Activated CD4-positive, alpha-beta T cell treated with anti-CD3 and anti-CD28 coated beads for 36 hours (primary cell): ENCODE measurements at regions of chr1 and their contacts with region 1.

Region 1: DNA sequence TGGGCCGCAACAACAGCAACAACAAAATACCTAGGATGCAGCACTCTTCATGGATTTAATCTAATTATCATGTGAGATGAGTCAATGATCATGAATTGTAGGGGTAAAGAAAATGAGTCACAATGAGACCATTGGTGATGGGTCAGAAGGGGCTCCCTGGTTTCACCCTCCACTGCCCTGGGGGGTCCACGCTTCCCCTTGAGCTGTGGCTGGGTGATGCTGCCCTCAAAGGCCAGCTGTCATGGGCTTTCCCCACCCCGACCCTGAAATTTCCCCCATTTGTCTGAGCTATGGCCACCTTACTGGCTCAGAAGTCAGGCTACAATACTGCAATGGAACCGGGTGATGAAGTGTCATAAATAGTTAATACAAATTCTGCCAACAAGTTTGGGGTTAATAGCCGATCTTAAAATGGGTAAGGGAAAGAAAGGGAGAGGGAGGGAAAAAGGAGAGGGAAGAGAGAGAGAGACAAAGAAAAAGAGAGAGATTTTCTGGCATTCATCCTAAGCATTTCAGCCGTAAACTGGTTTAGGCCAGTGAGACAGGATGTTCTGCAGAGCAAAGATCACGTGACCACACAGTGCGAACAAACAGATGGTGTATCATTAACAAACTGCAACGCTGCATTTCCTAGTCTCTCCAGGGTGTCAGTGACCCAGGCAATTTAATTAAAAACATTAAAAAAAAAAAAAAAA is 143.4 kb upstream of the ERRFI1 start:
- DNase-seq: peak; percentile 65
- ATAC-seq: peak; percentile 86
- H3K4me3 Mint-ChIP-seq: peak overlapping the region; percentile 1
- H3K27ac Mint-ChIP-seq: peak overlapping the region; percentile 93
- H3K4me1 Mint-ChIP-seq: peaks cover 39% of the 10 kb centered on the region
- H3K27me3 Mint-ChIP-seq: no peaks in the 10 kb centered on the region

Region 2: GRCh38 chr1:7561331-7561921 is 608.1 kb before region 1 on chr1:
- CTCF ChIA-PET with region 1: no interaction called
- POLR2A ChIA-PET with region 1: no interaction called
- intact Hi-C with region 1: no loop called
- DNase-seq: peak; percentile 61
- ATAC-seq: peak; percentile 73
- H3K4me3 Mint-ChIP-seq: no peak overlapping the region
- H3K27ac Mint-ChIP-seq: no peak overlapping the region
- H3K4me1 Mint-ChIP-seq: no peaks in the 10 kb centered on the region
- H3K27me3 Mint-ChIP-seq: no peaks in the 10 kb centered on the region

Region 3: GRCh38 chr1:8047681-8048445 is 121.6 kb before region 1 on chr1:
- CTCF ChIA-PET with region 1: no interaction called
- POLR2A ChIA-PET with region 1: no interaction called
- intact Hi-C with region 1: loop called in 1 of 2 experiments (anchors 5 kb)
- DNase-seq: no peak
- ATAC-seq: no peak
- H3K4me3 Mint-ChIP-seq: no peak overlapping the region
- H3K27ac Mint-ChIP-seq: peak overlapping the region; percentile 57
- H3K4me1 Mint-ChIP-seq: peaks cover 25% of the 10 kb centered on the region
- H3K27me3 Mint-ChIP-seq: peaks cover 4% of the 10 kb centered on the region

Region 4: GRCh38 chr1:8154621-8155052 is 14.9 kb before region 1 on chr1:
- CTCF ChIA-PET with region 1: interaction called, 5 read pairs
- POLR2A ChIA-PET with region 1: no interaction called
- intact Hi-C with region 1: loop called in 1 of 2 experiments (anchors 2 kb)
- DNase-seq: no peak
- ATAC-seq: no peak
- H3K4me3 Mint-ChIP-seq: no peak overlapping the region
- H3K27ac Mint-ChIP-seq: no peak overlapping the region
- H3K4me1 Mint-ChIP-seq: peaks cover 46% of the 10 kb centered on the region
- H3K27me3 Mint-ChIP-seq: peaks cover 10% of the 10 kb centered on the region

Region 5: DNA sequence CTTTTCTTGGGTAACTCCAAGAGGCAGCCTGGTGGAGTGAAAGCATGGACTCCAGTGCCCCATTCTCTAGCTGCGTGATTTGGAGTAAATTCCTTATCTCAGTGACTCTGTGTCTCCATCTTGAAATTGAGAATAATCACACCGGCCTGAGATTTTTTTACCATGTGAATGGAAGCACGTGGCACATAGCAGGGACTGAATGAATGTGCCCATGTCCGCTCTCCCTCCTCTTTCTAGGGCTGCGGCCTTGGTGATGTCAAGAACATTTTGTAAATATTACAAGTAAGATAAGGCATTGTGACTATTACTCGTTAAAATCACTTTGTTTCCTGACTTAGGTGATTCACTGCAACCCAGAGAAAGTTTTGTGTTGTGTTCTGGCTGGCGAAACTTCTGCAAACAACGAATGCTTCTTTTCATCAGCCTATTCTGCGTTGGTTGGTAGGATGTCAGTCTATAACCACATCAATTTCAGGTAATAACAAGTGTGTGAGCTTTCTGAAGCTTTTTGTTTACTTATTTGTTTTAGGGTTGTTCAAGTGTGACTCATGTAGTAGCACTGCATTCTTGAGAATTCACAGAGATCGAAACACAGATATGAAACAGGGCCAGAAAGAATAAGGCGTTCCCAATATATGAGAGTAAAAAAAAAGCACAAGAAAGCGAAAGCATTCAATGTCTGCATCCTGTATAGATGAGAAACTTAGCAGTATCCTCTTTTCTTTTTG is 12.7 kb after region 1 on chr1:
- CTCF ChIA-PET with region 1: interaction called, 6 read pairs
- POLR2A ChIA-PET with region 1: no interaction called
- intact Hi-C with region 1: loop called in 1 of 2 experiments (anchors 2 kb)
- DNase-seq: peak; percentile 41
- ATAC-seq: peak; percentile 92
- H3K4me3 Mint-ChIP-seq: peak overlapping the region; percentile 16
- H3K27ac Mint-ChIP-seq: peak overlapping the region; percentile 59
- H3K4me1 Mint-ChIP-seq: peaks cover 20% of the 10 kb centered on the region
- H3K27me3 Mint-ChIP-seq: no peaks in the 10 kb centered on the region